ENCODE measurements at regions of chr4 and their contacts with region 1.

Region 1: DNA sequence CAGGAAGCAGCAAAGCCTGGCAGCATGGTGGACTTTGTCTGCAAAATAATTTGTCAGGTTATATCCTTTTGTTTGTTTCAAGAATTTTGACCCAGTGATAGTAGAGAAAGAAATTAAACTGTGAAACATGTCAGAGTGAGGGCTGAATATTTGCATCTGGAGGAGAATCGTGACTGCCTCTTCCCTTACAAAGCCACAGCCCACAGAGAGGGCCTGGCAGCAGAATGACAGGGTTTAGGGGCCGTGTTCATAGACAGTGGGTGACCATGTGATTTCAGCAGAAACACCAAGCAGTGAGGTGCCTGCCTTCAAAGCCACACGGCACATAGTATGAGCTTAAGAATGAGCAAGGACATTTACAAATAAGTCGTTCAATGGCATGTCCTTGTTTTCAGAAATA is 24.4 kb upstream of the PLAC8 start:
- DNase-seq: no peak
- ATAC-seq: peak; percentile 73
- H3K4me3 ChIP-seq: no peak overlapping the region
- H3K4me3 Mint-ChIP-seq: peak overlapping the region; percentile 48
- H3K27ac ChIP-seq: peak overlapping the region in 1 of 2 donors; percentile 4
- H3K27ac Mint-ChIP-seq: peak overlapping the region; percentile 89
- H3K4me1 ChIP-seq: peaks cover 45 to 47% of the 10 kb centered on the region in 2 donors
- H3K4me1 Mint-ChIP-seq: peaks cover 54% of the 10 kb centered on the region
- H3K27me3 ChIP-seq: no peaks in the 10 kb centered on the region
- H3K27me3 Mint-ChIP-seq: no peaks in the 10 kb centered on the region
- CTCF ChIP-seq: no peak

Region 2: GRCh38 chr4:82998898-82999297 is 140.0 kb before region 1 on chr4:
- CTCF ChIA-PET with region 1: no interaction called
- POLR2A ChIA-PET with region 1: no interaction called
- intact Hi-C with region 1: no loop called
- DNase-seq: no peak
- ATAC-seq: no peak
- H3K4me3 ChIP-seq: no peak overlapping the region
- H3K4me3 Mint-ChIP-seq: no peak overlapping the region
- H3K27ac ChIP-seq: no peak overlapping the region
- H3K27ac Mint-ChIP-seq: no peak overlapping the region
- H3K4me1 ChIP-seq: no peaks in the 10 kb centered on the region
- H3K4me1 Mint-ChIP-seq: peaks cover 7% of the 10 kb centered on the region
- H3K27me3 ChIP-seq: no peaks in the 10 kb centered on the region
- H3K27me3 Mint-ChIP-seq: no peaks in the 10 kb centered on the region
- CTCF ChIP-seq: no peak

Region 3: GRCh38 chr4:83124111-83124780 is 14.7 kb before region 1 on chr4:
- CTCF ChIA-PET with region 1: interaction called, 5 read pairs
- POLR2A ChIA-PET with region 1: no interaction called
- intact Hi-C with region 1: loop called (anchors 2 kb)
- DNase-seq: peak; percentile 69
- ATAC-seq: peak; percentile 86
- H3K4me3 ChIP-seq: peak overlapping the region in 1 of 5 experiments; percentile 16
- H3K4me3 Mint-ChIP-seq: peak overlapping the region; percentile 75
- H3K27ac ChIP-seq: no peak overlapping the region
- H3K27ac Mint-ChIP-seq: peak overlapping the region; percentile 90
- H3K4me1 ChIP-seq: peaks cover 38 to 47% of the 10 kb centered on the region in 2 donors
- H3K4me1 Mint-ChIP-seq: peaks cover 48% of the 10 kb centered on the region
- H3K27me3 ChIP-seq: no peaks in the 10 kb centered on the region
- H3K27me3 Mint-ChIP-seq: no peaks in the 10 kb centered on the region
- CTCF ChIP-seq: no peak